ENCODE measurements at regions of chr10 and their contacts with region 1.

Region 1: GRCh38 chr10:68156373-68157185 is 47.3 kb downstream of the MYPN start:
- DNase-seq: peak; percentile 75
- ATAC-seq: peak; percentile 81
- H3K4me3 Mint-ChIP-seq: no peak overlapping the region
- H3K27ac Mint-ChIP-seq: no peak overlapping the region
- H3K4me1 Mint-ChIP-seq: no peaks in the 10 kb centered on the region
- H3K27me3 Mint-ChIP-seq: peaks cover 2% of the 10 kb centered on the region

Region 2: GRCh38 chr10:67884313-67884841 is 272.2 kb before region 1 on chr10 and contains the start of gene SIRT1:
- CTCF ChIA-PET with region 1: interaction called, 30 read pairs
- POLR2A ChIA-PET with region 1: no interaction called
- DNase-seq: peak; percentile 94
- ATAC-seq: peak; percentile 85
- H3K4me3 Mint-ChIP-seq: peak within 1 kb of the TSS; percentile 93
- H3K27ac Mint-ChIP-seq: peak within 1 kb of the TSS; percentile 93
- H3K4me1 Mint-ChIP-seq: peaks cover 31% of the 10 kb centered on the region
- H3K27me3 Mint-ChIP-seq: no peaks in the 10 kb centered on the region
- total RNA-seq, gene SIRT1: 21.9 TPM

Region 3: GRCh38 chr10:68082872-68083271 is 73.7 kb before region 1 on chr10:
- CTCF ChIA-PET with region 1: interaction called, 18 read pairs
- POLR2A ChIA-PET with region 1: no interaction called
- DNase-seq: no peak
- ATAC-seq: no peak
- H3K4me3 Mint-ChIP-seq: no peak overlapping the region
- H3K27ac Mint-ChIP-seq: no peak overlapping the region
- H3K4me1 Mint-ChIP-seq: peaks cover 4% of the 10 kb centered on the region
- H3K27me3 Mint-ChIP-seq: peaks cover 16% of the 10 kb centered on the region

Region 4: GRCh38 chr10:68135362-68135761 is 21.2 kb before region 1 on chr10:
- CTCF ChIA-PET with region 1: no interaction called
- POLR2A ChIA-PET with region 1: no interaction called
- DNase-seq: no peak
- ATAC-seq: no peak
- H3K4me3 Mint-ChIP-seq: no peak overlapping the region
- H3K27ac Mint-ChIP-seq: no peak overlapping the region
- H3K4me1 Mint-ChIP-seq: no peaks in the 10 kb centered on the region
- H3K27me3 Mint-ChIP-seq: peaks cover 15% of the 10 kb centered on the region

Region 5: GRCh38 chr10:68145705-68146104 is 10.9 kb before region 1 on chr10:
- CTCF ChIA-PET with region 1: interaction called, 12 read pairs
- POLR2A ChIA-PET with region 1: no interaction called
- DNase-seq: no peak
- ATAC-seq: no peak
- H3K4me3 Mint-ChIP-seq: no peak overlapping the region
- H3K27ac Mint-ChIP-seq: no peak overlapping the region
- H3K4me1 Mint-ChIP-seq: no peaks in the 10 kb centered on the region
- H3K27me3 Mint-ChIP-seq: peaks cover 2% of the 10 kb centered on the region

Region 6: GRCh38 chr10:68196701-68197100 is 40.1 kb after region 1 on chr10:
- CTCF ChIA-PET with region 1: no interaction called
- POLR2A ChIA-PET with region 1: no interaction called
- DNase-seq: no peak
- ATAC-seq: no peak
- H3K4me3 Mint-ChIP-seq: no peak overlapping the region
- H3K27ac Mint-ChIP-seq: no peak overlapping the region
- H3K4me1 Mint-ChIP-seq: no peaks in the 10 kb centered on the region
- H3K27me3 Mint-ChIP-seq: peaks cover 27% of the 10 kb centered on the region

Region 7: GRCh38 chr10:68284062-68285001 is 127.8 kb after region 1 on chr10:
- CTCF ChIA-PET with region 1: no interaction called
- POLR2A ChIA-PET with region 1: no interaction called
- DNase-seq: no peak
- ATAC-seq: no peak
- H3K4me3 Mint-ChIP-seq: no peak overlapping the region
- H3K27ac Mint-ChIP-seq: no peak overlapping the region
- H3K4me1 Mint-ChIP-seq: no peaks in the 10 kb centered on the region
- H3K27me3 Mint-ChIP-seq: no peaks in the 10 kb centered on the region

Measured in activated CD8-positive, alpha-beta T cell treated with anti-CD3 and anti-CD28 coated beads, Interleukin-2, amount 10 ng/mL, durations not matched to agents 7 days and 5 days (primary cell).